ENCODE measurements at regions of chr1 and their contacts with region 1.

Region 1: DNA sequence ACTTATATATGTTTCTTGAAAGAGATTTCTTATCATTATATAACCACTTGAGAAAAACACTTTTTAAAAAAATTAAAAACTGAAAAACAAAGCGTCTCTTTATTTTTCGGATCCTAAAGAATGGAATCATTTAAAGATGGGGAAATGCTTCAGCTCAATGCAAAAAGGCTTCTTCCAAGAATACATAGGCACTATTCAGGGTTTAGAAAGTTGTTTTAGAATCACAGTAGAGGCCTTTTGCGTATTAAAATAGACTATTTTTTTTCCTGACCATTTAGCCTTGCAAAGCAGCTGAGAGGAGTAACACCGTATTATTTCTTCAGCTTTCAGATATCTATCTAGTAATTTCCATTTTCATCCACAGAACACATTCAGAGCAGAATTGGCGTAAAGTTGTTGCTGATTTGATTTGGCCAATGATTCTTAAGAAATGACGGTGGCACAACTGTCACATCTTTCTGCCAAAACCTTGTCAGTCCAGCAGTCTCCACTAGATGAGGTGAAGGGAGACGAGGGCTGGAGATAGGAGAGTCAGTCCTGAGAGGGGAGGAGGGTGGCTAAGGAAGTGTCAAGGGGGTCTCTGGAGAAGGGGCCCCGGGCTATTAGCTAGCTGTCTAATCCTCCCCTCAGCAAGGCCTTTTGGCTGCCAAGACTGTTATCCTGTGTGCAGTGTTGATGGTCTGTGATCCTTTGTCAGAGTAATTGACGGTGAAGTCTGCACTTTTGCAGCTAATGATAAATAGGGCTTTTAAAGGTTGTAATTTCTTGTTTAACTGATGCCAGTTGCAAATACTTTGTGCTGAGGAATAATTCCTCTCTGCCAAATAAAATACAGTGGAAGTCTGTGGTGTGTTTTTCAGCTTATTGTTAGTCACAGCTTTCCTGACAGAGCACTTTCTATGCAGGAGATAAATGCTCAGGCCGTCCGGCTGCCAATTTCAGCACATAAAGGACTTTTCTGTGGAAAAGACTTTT is 34.7 kb downstream of the PRRX1 start:
- DNase-seq: no peak
- CTCF ChIP-seq: no peak

Region 2: DNA sequence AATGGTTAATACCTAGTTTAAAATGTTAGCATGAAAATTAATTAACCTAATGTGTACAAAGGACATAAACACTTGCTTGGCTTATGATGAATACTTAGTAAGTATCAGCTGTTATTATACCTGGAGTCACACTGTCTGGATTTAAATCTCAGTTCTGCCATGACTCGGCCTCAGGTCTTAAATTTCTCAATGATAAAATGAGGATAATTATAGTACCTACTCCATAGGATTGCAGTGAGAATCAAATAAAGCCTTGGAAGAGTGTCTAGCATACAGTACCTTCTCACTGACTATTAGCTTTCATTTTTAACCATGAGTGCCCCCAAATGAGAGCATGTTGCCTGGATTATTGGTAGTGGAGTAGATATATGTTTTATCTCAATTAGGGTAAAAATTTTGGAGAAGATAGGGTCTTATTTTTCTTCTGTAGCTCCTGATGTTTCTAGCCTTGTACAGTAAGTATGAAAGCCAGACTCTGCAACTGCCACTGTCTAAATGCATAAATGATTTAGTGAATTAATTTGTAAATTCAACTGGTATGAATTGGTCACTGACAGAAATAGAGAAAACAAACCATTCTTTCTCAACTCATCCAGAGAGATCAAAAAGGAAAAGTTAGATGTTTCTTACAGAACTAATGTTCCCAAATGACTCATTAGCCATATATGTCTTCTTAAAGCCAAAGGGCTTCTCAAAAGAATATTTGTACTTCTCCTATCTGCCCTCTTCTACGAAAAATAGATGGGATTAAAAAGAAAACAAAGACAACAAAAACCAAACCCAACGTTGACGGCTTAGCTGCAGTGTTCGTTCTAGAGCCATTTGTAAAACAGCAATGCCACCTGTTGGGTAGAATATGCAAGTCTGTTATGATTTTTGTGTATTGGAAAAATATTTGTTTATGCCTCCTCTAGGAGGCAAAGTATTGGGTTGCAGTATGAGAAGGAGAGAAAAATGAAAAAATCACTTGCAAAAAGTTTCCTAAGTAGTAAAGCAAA is 183.0 kb after region 1 on chr1:
- in situ Hi-C with region 1: loop called (anchors 25 kb)
- DNase-seq: no peak
- CTCF ChIP-seq: peak; percentile 52

Measured in GM13976 (cell line).